Caco-2 (cell line): ENCODE measurements at regions of chr19 and their contacts with region 1.

Region 1: GRCh38 chr19:6279931-6280591 is at the start of gene MLLT1:
- DNase-seq: peak; percentile 97 to 98
- H3K4me3 ChIP-seq: peak within 1 kb of the TSS; percentile 61
- H3K4me3 Mint-ChIP-seq: peak within 1 kb of the TSS; percentile 92
- H3K27ac Mint-ChIP-seq: peak within 1 kb of the TSS; percentile 89
- H3K4me1 ChIP-seq: peaks cover 10% of the 10 kb centered on the region; the same call in 1 of the 2 replicates
- H3K4me1 Mint-ChIP-seq: peaks cover 14% of the 10 kb centered on the region
- H3K27me3 ChIP-seq: no peaks in the 10 kb centered on the region
- H3K27me3 Mint-ChIP-seq: no peaks in the 10 kb centered on the region
- CTCF ChIP-seq: peak; percentile 56 to 80
- total RNA-seq, gene MLLT1: 60.0 and 63.2 TPM in 2 replicates

Region 2: DNA sequence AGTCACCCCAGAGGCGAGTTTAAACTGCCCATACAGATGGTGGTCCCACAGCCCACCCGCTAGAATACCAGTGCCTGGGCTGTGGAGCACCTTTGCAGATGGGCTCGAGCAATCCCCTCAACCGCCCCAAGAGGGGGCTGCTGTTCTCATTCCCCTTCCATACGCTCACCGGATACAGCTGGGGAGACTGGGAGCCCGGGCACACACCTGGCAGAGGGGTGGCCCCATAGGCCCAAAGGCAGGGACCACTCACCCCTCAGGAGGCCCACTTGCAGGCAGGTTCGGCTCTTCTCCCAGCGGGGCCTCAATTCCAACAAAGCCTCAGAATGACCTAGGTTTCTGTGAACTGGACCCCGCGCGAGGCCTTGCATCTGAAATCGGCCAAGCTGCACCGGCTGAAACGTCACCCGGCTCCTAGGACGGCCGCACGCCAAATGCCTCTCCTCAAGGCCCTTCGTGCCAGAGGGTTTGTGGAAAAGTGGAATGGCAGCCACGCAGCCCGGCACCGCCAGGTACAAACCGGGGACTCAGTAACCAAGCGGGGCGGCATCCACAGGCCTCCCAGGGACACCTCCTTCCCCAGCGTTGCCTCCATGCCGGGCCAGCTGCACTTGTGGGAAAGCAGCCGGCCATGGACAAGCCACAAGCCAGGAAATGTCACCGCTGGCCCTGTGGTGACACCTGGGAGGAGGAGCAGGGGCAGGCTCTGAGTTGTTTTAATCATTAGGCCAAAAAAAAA is 19.0 kb before region 1 on chr19:
- CTCF ChIA-PET with region 1: no interaction called
- POLR2A ChIA-PET with region 1: interaction called, 10 read pairs
- intact Hi-C with region 1: no loop called
- DNase-seq: peak in 1 of 2 experiments; percentile 56
- H3K4me3 ChIP-seq: no peak overlapping the region
- H3K4me3 Mint-ChIP-seq: no peak overlapping the region
- H3K27ac Mint-ChIP-seq: no peak overlapping the region
- H3K4me1 ChIP-seq: no peaks in the 10 kb centered on the region
- H3K4me1 Mint-ChIP-seq: no peaks in the 10 kb centered on the region
- H3K27me3 ChIP-seq: no peaks in the 10 kb centered on the region
- H3K27me3 Mint-ChIP-seq: no peaks in the 10 kb centered on the region
- CTCF ChIP-seq: peak; percentile 60 to 67